ENCODE measurements at regions of chr12 and their contacts with region 1.

Region 1: GRCh38 chr12:47837190-47838171 is 17.8 kb upstream of the HDAC7 start:
- DNase-seq: peak; percentile 56 to 70
- H3K4me3 ChIP-seq: no peak overlapping the region
- H3K27ac ChIP-seq: no peak overlapping the region
- H3K4me1 ChIP-seq: peaks cover 35% of the 10 kb centered on the region
- H3K27me3 ChIP-seq: no peaks in the 10 kb centered on the region
- CTCF ChIP-seq: peak; percentile 97

Region 2: DNA sequence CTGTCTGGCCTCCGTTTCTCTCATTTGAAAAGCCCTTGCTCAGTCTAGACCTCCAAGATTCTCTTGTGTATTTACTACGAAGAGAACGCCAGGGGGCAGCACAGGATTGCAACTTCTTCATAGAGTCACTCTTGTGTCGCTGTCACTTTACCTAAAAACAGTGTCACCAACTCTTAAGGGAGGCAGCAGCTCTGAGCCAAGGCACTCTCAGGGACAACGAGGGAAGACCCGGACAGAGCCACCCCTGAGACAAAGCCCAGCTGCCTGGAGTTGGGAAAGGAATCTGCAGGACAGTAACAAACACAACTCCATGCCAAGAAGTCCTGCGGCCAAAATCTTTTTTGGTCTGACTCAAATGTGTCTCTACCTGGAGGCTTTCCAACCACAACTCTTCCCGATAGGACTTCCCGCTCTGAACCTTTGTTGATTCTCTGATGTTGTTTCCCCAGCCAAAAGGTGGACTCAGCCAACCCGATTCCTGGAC is 122.0 kb before region 1 on chr12:
- CTCF ChIA-PET with region 1: interaction called, 8 read pairs
- POLR2A ChIA-PET with region 1: no interaction called
- intact Hi-C with region 1: loop called (anchors 1 kb)
- DNase-seq: peak; percentile 56 to 61
- H3K4me3 ChIP-seq: no peak overlapping the region
- H3K27ac ChIP-seq: no peak overlapping the region
- H3K4me1 ChIP-seq: no peaks in the 10 kb centered on the region
- H3K27me3 ChIP-seq: no peaks in the 10 kb centered on the region
- CTCF ChIP-seq: peak; percentile 91

Region 3: GRCh38 chr12:47753034-47754001 is 84.2 kb before region 1 on chr12:
- CTCF ChIA-PET with region 1: no interaction called
- POLR2A ChIA-PET with region 1: interaction called, 18 read pairs
- intact Hi-C with region 1: no loop called
- DNase-seq: peak; percentile 89 to 92
- H3K4me3 ChIP-seq: peak overlapping the region; percentile 29; the same call in 1 of the 2 replicates
- H3K27ac ChIP-seq: peak overlapping the region; percentile 75
- H3K4me1 ChIP-seq: peaks cover 81% of the 10 kb centered on the region
- H3K27me3 ChIP-seq: no peaks in the 10 kb centered on the region
- CTCF ChIP-seq: no peak; the same call in 1 of the 2 replicates

Region 4: GRCh38 chr12:47797441-47797840 is 40.0 kb before region 1 on chr12:
- CTCF ChIA-PET with region 1: interaction called, 7 read pairs
- POLR2A ChIA-PET with region 1: no interaction called
- intact Hi-C with region 1: loop called (anchors 1 kb)
- DNase-seq: no peak
- H3K4me3 ChIP-seq: no peak overlapping the region
- H3K27ac ChIP-seq: no peak overlapping the region
- H3K4me1 ChIP-seq: no peaks in the 10 kb centered on the region
- H3K27me3 ChIP-seq: no peaks in the 10 kb centered on the region
- CTCF ChIP-seq: peak; percentile 46

Region 5: DNA sequence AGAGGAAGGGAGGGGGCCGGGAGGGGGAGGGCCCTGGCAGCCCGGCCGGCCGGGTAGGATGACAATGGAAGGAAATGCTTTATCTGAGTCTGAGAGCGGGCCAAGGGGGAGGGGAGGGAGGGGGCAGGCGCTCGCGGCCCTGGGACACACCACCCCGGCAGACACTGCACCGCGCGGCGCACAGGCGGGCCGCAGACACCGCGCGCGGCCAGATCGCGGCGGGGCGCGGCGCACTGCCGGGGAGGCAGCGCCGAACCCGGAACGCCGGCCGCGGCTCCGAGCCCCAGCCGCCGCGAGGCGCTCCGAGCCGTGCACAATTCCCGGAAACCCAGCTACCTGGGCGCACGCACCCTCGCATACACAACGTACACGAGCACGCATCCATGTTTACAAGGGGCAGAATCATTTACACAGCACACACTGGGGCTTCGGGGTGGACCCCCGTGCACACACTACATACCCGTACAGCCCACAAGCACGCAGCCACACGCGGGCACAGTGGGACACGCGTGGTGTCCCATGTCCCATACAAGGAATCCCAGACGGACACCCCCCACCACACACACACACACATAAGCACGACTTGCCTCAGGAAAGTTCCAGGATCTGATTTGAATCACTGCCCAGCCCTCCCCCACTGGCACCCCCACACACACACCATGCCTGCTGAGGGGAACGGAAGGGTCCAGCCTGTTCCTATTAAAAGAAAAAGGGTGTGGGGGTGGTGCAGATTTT is 17.4 kb before region 1 on chr12 and contains the start of gene HDAC7:
- CTCF ChIA-PET with region 1: interaction called, 5 read pairs
- POLR2A ChIA-PET with region 1: interaction called, 13 read pairs
- intact Hi-C with region 1: loop called (anchors 1 kb)
- DNase-seq: peak; percentile 54 to 68
- H3K4me3 ChIP-seq: peak within 1 kb of the TSS; percentile 95
- H3K27ac ChIP-seq: peak within 1 kb of the TSS; percentile 80
- H3K4me1 ChIP-seq: peaks cover 76% of the 10 kb centered on the region
- H3K27me3 ChIP-seq: no peaks in the 10 kb centered on the region
- CTCF ChIP-seq: no peak
- total RNA-seq, gene HDAC7: 106 and 114 TPM in 2 replicates

Region 6: DNA sequence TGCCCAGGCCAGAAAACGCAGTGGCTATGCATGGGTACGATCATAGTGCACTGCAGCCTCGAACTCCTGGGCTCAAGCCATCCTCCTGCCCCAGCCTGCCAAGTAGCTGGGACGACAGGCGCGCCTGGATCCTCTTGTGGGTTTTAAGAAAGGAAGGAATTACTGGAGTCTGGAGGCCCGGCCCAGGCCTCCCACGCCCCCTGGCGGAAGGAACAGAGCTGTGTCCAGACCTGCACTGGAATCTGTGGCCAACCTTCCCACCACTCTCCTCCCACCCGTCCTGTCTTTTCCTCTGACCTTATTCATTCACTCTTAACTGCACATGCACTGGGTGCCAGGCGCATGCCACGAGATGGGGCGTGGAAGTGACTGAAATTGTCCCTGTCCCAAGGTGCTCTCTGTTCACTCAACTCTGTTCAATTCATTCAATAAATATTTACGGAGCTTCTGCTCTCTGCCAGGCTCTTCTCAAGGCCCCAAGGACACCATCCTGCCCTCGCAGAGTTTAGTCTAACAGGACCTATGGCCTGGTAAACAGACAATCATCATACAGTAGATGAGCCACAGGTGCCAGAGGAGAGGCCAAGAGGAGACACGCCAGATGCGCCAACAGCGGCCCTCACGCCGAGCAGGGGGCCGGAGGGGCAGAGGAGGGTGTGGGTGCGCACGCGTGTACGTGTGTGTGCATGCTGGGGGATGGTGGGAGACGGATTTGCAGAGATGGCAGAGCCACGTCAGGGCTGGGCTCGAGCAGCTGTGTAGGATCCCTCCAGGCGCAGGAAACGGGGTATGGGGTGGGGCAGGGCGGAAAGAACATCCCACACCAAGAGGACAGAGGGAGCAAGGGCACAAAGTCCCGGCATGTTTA is 112.2 kb after region 1 on chr12:
- CTCF ChIA-PET with region 1: interaction called, 4 read pairs
- POLR2A ChIA-PET with region 1: no interaction called
- intact Hi-C with region 1: loop called (anchors 1 kb)
- DNase-seq: peak; percentile 66 to 79
- H3K4me3 ChIP-seq: no peak overlapping the region
- H3K27ac ChIP-seq: no peak overlapping the region
- H3K4me1 ChIP-seq: peaks cover 51% of the 10 kb centered on the region
- H3K27me3 ChIP-seq: no peaks in the 10 kb centered on the region
- CTCF ChIP-seq: peak; percentile 93

Measured in PC-9 (cell line).